Mammary epithelial cell (primary cell): ENCODE measurements at regions of chr7 and their contacts with region 1.

Region 1: GRCh38 chr7:99123571-99124041 is 20.3 kb downstream of the SMURF1 start:
- DNase-seq: peak; percentile 40
- H3K4me3 ChIP-seq: no peak overlapping the region
- H3K27ac ChIP-seq: peak overlapping the region; percentile 51
- H3K4me1 ChIP-seq: peaks cover 23% of the 10 kb centered on the region
- H3K27me3 ChIP-seq: no peaks in the 10 kb centered on the region
- CTCF ChIP-seq: no peak

Region 2: GRCh38 chr7:98852826-98853225 is 270.8 kb before region 1 on chr7:
- CTCF ChIA-PET with region 1: no interaction called
- dilution Hi-C with region 1: no loop called
- in situ Hi-C with region 1: no loop called
- intact Hi-C with region 1: no loop called
- DNase-seq: no peak
- H3K4me3 ChIP-seq: no peak overlapping the region
- H3K27ac ChIP-seq: no peak overlapping the region
- H3K4me1 ChIP-seq: no peaks in the 10 kb centered on the region
- H3K27me3 ChIP-seq: no peaks in the 10 kb centered on the region
- CTCF ChIP-seq: no peak

Region 3: DNA sequence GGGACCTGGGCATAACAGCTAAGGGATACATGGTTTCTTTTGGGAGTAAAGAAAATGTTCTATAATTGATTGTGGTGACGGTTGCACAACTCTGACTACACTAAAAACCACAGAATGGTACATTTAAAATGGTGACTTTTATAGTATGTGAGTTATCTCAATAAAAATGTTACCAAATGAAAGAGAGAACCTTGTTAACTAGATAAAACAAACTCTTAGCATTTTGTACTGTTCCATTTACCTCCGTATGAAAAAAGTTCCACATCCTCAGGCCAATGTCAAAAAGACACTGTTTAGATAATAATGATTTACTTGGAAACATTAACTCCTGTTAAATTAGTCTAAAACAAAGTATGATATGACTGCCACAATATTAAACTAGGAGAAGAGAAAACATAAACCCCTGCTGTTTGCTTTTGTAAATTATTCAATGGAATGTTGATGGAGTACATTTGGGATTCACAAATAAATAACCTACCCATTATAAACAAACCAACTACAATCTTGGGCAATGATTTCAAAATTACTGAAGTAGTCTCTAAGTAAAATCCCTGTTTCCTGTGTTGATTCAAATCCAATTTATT is 40.4 kb before region 1 on chr7:
- CTCF ChIA-PET with region 1: no interaction called
- dilution Hi-C with region 1: no loop called
- in situ Hi-C with region 1: no loop called
- intact Hi-C with region 1: loop called (anchors 5 kb)
- DNase-seq: no peak
- H3K4me3 ChIP-seq: no peak overlapping the region
- H3K27ac ChIP-seq: no peak overlapping the region
- H3K4me1 ChIP-seq: peaks cover 10% of the 10 kb centered on the region
- H3K27me3 ChIP-seq: no peaks in the 10 kb centered on the region
- CTCF ChIP-seq: no peak

Region 4: DNA sequence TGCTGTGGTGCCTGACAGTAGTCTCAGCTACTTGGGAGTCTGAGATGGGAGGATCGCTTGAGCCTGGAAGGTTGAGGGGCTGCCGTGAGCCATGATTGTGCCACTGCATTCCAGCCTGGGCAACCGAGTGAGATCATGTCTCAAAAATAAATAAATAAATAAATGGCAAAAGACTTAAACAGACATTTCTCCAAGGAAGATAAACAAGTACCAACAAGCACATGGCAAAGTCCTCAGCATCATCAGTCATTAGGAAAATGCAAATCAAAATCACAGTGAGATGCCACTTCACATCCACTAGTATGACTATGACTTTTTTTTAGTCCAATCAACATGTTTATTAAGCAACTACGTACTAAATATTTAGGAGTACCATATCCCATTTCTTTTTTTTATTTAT is 105.6 kb after region 1 on chr7:
- CTCF ChIA-PET with region 1: no interaction called
- dilution Hi-C with region 1: loop called (anchors 5 kb)
- in situ Hi-C with region 1: no loop called
- intact Hi-C with region 1: no loop called
- DNase-seq: peak; percentile 51
- H3K4me3 ChIP-seq: no peak overlapping the region
- H3K27ac ChIP-seq: no peak overlapping the region
- H3K4me1 ChIP-seq: peaks cover 14% of the 10 kb centered on the region
- H3K27me3 ChIP-seq: no peaks in the 10 kb centered on the region
- CTCF ChIP-seq: no peak

Region 5: GRCh38 chr7:99579956-99580777 is 456.6 kb after region 1 on chr7:
- CTCF ChIA-PET with region 1: no interaction called
- dilution Hi-C with region 1: no loop called
- in situ Hi-C with region 1: no loop called
- intact Hi-C with region 1: no loop called
- DNase-seq: no peak
- H3K4me3 ChIP-seq: peak overlapping the region; percentile 41 to 49 (median 47)
- H3K27ac ChIP-seq: no peak overlapping the region
- H3K4me1 ChIP-seq: peaks cover 7% of the 10 kb centered on the region
- H3K27me3 ChIP-seq: no peaks in the 10 kb centered on the region
- CTCF ChIP-seq: peak in 1 of 2 donors; percentile 35